ENCODE measurements at regions of chr6 and their contacts with region 1.

Region 1: DNA sequence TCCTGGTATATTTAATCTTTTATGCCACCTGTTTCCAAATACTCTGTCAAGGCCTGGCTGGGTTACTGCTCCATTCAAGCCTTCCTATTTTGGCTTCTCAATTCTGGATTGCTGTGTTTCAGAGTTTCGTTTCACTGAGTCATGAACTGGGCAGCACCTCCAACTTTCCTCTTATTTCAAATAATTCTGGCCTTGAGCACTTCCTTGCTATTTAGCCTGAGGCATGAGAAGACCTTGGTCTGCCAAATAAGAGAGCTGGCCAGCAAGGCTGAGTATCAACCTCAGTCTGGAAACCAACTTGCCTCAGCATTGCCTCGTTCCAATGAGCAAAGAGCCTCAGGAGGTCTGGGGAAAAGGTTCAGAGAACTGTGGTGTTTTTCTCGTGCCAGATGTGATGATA is 66.6 kb downstream of the TNFAIP3 start:
- DNase-seq: peak; percentile 80

Region 2: DNA sequence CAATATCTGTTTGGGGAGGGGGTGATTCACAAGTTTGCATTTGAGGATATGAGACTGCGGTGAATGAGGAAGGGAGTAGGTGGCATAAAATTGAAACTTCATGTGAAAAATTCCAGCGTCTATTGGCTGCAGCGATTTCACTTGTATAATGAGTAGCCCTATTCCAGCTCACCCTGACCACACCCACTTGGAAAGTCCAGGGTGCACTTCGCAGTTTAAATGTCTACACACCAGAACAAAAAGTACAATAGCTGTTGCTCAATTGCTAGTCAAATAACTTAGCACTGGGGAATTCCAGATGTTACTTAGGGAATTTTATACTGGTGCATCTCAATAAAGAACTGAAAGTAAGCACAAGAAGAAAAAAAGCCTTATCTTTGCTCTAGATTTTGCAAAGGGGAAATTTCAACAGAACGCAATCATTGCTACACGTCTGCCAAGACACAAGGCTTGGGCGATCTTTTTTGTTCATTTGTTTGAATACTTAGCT is 60.4 kb before region 1 on chr6:
- intact Hi-C with region 1: loop called in 1 of 2 experiments (anchors 10 kb)
- DNase-seq: no peak

Region 3: GRCh38 chr6:138031850-138032249 is 98.2 kb after region 1 on chr6:
- intact Hi-C with region 1: no loop called
- DNase-seq: no peak